CD4-positive, alpha-beta memory T cell (primary cell): ENCODE measurements at regions of chr2 and their contacts with region 1.

Region 1: DNA sequence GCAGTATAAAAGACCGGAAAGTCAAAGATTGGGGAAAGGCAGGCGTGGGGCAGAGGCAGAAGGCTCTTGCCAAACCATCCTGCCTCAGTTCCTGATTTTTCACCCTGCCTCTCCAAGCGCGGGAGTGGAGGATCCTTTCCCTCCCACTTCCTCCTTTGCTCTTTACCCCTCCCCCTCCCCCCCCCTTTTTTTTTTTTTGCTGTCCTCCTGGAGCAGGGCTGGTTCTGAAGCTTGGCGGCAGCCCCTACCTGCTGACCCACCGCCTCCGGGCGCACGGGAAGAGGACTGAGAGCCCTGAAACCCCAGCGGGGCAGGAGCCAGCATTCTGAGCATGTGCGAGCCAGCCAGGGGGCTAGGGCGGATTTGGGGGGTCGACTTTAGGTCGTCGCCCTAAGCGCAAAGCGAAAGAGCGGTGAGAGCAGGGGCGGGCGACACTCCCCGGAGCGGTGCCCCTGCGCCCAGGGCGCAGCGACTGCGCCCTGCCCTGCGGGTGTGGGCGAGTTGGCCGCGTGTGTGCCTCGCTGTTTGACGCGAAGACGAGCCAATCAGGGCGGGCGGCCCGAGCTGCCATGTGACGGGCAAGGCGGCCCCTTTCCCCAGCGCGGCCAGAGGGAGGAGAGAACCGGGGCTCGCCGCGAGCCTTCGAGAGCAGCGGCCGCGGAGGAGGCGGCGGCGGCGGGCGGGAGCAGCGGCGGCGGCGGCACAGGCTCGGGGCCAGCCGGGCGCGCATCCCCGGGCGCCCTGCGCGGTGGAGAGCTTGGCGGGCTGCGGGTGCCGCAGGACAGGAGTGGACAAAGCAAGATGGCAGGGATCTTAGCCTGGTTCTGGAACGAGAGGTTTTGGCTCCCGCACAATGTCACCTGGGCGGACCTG is at the start of gene CERS6:
- DNase-seq: peak; percentile 47 to 68 (median 59)
- H3K4me3 ChIP-seq: peak within 1 kb of the TSS; percentile 61 to 69
- H3K4me3 Mint-ChIP-seq: peak within 1 kb of the TSS in 5 of 8 donors; percentile 83 to 91 (median 86)
- H3K27ac ChIP-seq: no peak within 1 kb of the TSS
- H3K27ac Mint-ChIP-seq: peak within 1 kb of the TSS in 3 of 7 donors; percentile 22 to 59 (median 43)
- H3K4me1 ChIP-seq: peaks cover 23% of the 10 kb centered on the region
- H3K4me1 Mint-ChIP-seq: peaks cover 25 to 42% (median 33%) of the 10 kb centered on the region in 4 donors
- H3K27me3 ChIP-seq: no peaks in the 10 kb centered on the region
- H3K27me3 Mint-ChIP-seq: no peaks in the 10 kb centered on the region
- total RNA-seq, gene CERS6: 10.1 to 11.3 TPM

Region 2: DNA sequence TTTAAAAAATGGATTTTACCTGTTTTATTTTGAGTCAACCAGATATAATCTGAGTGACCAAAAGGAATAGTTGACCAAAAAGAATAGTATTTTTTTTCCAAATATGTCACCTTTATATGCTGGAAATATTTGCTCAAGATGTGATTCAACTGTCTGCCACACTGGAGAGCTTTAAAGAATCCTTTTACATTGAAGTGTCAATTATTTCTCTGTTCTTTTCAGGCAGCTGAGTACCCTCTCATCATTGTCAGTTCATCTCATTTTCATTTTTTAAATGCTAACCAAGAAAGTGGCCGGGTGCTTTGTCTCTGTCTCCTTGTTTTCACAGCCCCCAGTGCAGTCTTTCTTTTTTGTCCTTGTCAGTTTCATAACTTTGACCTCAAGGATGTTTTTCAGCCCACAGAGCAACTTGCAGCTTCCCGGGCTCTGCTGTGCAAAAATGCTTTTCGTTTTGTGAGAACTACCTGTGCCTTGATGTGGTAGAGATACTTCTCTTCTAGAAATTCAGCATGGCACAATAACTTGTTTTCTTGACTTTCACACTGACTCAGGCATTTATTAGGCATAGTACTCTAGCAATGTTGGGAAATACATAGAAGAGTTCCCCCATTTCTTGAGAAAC is 23.2 kb before region 1 on chr2:
- CTCF ChIA-PET with region 1: no interaction called
- POLR2A ChIA-PET with region 1: interaction called, 5 read pairs
- intact Hi-C with region 1: loop called (anchors 2 kb)
- DNase-seq: peak in 4 of 5 donors; percentile 30 to 38 (median 35)
- H3K4me3 ChIP-seq: no peak overlapping the region
- H3K4me3 Mint-ChIP-seq: peak overlapping the region in 7 of 8 donors; percentile 33 to 85 (median 63)
- H3K27ac ChIP-seq: no peak overlapping the region
- H3K27ac Mint-ChIP-seq: peak overlapping the region in 4 of 7 donors; percentile 43 to 85 (median 63)
- H3K4me1 ChIP-seq: peaks cover 34% of the 10 kb centered on the region
- H3K4me1 Mint-ChIP-seq: peaks cover 21 to 34% (median 32%) of the 10 kb centered on the region in 4 donors
- H3K27me3 ChIP-seq: no peaks in the 10 kb centered on the region
- H3K27me3 Mint-ChIP-seq: peaks cover 0 to 1% of the 10 kb centered on the region in 2 donors

Region 3: DNA sequence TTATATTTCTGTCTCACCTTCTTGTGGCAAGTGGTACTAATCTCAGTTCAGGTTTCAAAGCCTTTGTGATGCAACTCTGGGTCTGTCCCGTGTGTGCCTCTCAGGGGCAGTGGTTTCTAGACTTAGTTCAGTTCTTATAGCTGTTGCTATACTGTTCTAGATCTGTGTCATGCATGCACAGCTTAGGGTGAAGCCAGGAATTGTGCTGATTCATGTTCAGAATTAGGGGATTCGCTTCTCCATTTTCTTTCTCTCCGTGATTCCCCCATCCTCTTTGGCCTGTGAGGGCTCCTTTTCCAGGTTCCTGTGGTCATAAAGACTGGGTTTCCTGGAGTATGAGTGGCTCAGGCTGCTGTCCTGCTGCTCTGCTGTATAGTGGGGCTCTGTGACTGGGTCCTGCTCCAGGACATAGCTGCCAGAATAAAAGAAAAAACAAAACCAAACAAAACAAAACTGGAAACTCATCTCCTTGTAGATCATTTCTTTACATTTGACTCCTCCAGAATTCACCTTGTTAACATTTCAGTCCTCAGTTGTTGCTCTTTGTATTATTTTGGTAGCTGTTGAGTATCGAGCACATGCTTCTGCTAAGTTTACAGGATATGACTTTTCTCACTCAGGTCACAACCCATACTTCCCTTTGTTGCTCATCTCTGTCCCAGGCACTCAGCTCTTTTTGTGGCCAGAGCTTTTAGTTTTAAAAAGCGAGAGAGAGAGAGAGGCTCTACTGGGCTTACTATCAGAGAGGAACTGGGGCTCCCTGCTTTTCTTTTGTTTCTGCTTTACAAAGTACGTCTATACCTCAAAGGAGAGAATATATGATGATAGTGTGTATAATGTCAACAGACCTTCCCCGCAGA is 34.4 kb after region 1 on chr2:
- CTCF ChIA-PET with region 1: no interaction called
- POLR2A ChIA-PET with region 1: interaction called, 3 read pairs
- intact Hi-C with region 1: loop called (anchors 5 kb)
- DNase-seq: peak; percentile 21 to 44 (median 25)
- H3K4me3 ChIP-seq: peak overlapping the region; percentile 0 to 39
- H3K4me3 Mint-ChIP-seq: peak overlapping the region; percentile 65 to 92 (median 82)
- H3K27ac ChIP-seq: peak overlapping the region; percentile 34
- H3K27ac Mint-ChIP-seq: peak overlapping the region; percentile 30 to 85 (median 77)
- H3K4me1 ChIP-seq: peaks cover 28% of the 10 kb centered on the region
- H3K4me1 Mint-ChIP-seq: peaks cover 21 to 34% (median 30%) of the 10 kb centered on the region in 4 donors
- H3K27me3 ChIP-seq: no peaks in the 10 kb centered on the region
- H3K27me3 Mint-ChIP-seq: no peaks in the 10 kb centered on the region